Caco-2 (cell line): ENCODE measurements at regions of chr20 and their contacts with region 1.

Region 1: DNA sequence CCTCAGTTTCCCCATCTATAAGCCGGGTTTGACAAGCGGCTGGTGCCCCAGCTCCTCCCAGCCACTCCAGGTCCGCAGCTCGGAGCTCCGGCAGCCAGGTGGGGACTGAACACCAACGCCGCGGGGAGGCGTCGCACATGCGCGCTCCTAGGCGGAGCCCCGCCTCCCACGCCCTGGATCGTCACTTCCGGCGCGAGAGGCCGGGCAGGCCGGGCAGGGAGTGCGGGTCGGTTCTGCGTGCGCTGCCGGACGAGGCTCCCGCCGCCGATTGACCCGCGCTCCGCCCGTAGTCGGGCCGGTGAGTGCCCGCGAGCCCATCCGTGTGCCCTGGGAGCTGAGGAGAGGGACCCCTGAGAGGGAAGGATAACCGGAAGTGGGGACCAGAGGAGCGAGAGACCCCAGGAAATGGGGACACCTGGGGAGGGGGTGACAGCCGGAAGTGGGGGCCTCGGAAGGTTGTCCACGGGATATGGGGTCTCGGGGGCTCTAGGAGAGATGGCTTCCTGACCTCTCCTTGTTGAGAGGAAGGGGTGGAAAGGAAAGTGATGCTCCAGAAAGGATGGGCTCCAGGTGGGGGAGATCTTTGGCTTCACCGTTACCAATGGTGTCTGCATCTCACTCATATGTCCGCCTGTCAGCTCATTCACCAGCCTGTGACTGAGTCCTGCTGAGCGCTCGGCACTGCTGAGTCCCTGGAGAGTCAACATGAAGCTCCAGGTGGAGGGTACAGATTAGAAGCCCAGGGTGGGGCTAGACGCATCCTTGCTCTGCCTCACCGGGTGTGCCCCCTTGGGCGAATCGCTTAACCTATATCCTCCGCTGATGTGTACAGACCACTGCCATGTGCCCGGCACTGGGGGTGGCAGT is at the start of gene TTPAL:
- DNase-seq: peak; percentile 95 to 99
- H3K4me3 ChIP-seq: peak within 1 kb of the TSS; percentile 89
- H3K4me3 Mint-ChIP-seq: peak within 1 kb of the TSS; percentile 98
- H3K27ac Mint-ChIP-seq: peak within 1 kb of the TSS; percentile 96
- H3K4me1 ChIP-seq: peaks cover 19% of the 10 kb centered on the region
- H3K4me1 Mint-ChIP-seq: peaks cover 25% of the 10 kb centered on the region
- H3K27me3 ChIP-seq: no peaks in the 10 kb centered on the region
- H3K27me3 Mint-ChIP-seq: no peaks in the 10 kb centered on the region
- CTCF ChIP-seq: peak; percentile 28 to 78
- total RNA-seq, gene TTPAL: 53.9 and 54.6 TPM in 2 replicates

Region 2: GRCh38 chr20:44210422-44211176 is 265.3 kb before region 1 on chr20 and contains the start of gene OSER1:
- CTCF ChIA-PET with region 1: interaction called, 158 read pairs
- POLR2A ChIA-PET with region 1: interaction called, 7 read pairs
- intact Hi-C with region 1: no loop called
- DNase-seq: peak; percentile 100
- H3K4me3 ChIP-seq: peak within 1 kb of the TSS; percentile 74
- H3K4me3 Mint-ChIP-seq: peak within 1 kb of the TSS; percentile 95
- H3K27ac Mint-ChIP-seq: peak within 1 kb of the TSS; percentile 96
- H3K4me1 ChIP-seq: peaks cover 19% of the 10 kb centered on the region
- H3K4me1 Mint-ChIP-seq: peaks cover 27% of the 10 kb centered on the region
- H3K27me3 ChIP-seq: no peaks in the 10 kb centered on the region
- H3K27me3 Mint-ChIP-seq: no peaks in the 10 kb centered on the region
- CTCF ChIP-seq: no peak
- total RNA-seq, gene OSER1: 79.7 and 82.3 TPM in 2 replicates

Region 3: GRCh38 chr20:44394702-44395460 is 81.0 kb before region 1 on chr20:
- CTCF ChIA-PET with region 1: interaction called, 25 read pairs
- POLR2A ChIA-PET with region 1: interaction called, 4 read pairs
- intact Hi-C with region 1: no loop called
- DNase-seq: peak; percentile 97 to 98
- H3K4me3 ChIP-seq: peak overlapping the region; percentile 11
- H3K4me3 Mint-ChIP-seq: peak overlapping the region; percentile 47
- H3K27ac Mint-ChIP-seq: peak overlapping the region; percentile 78
- H3K4me1 ChIP-seq: peaks cover 79% of the 10 kb centered on the region
- H3K4me1 Mint-ChIP-seq: peaks cover 52% of the 10 kb centered on the region
- H3K27me3 ChIP-seq: no peaks in the 10 kb centered on the region
- H3K27me3 Mint-ChIP-seq: no peaks in the 10 kb centered on the region
- CTCF ChIP-seq: no peak

Region 4: GRCh38 chr20:44460795-44461141 is 15.2 kb before region 1 on chr20:
- CTCF ChIA-PET with region 1: interaction called, 12 read pairs
- POLR2A ChIA-PET with region 1: interaction called, 4 read pairs
- intact Hi-C with region 1: no loop called
- DNase-seq: peak in 1 of 2 experiments; percentile 69
- H3K4me3 ChIP-seq: no peak overlapping the region
- H3K4me3 Mint-ChIP-seq: no peak overlapping the region
- H3K27ac Mint-ChIP-seq: no peak overlapping the region
- H3K4me1 ChIP-seq: peaks cover 9% of the 10 kb centered on the region
- H3K4me1 Mint-ChIP-seq: no peaks in the 10 kb centered on the region
- H3K27me3 ChIP-seq: no peaks in the 10 kb centered on the region
- H3K27me3 Mint-ChIP-seq: no peaks in the 10 kb centered on the region
- CTCF ChIP-seq: peak; percentile 73 to 82

Region 5: DNA sequence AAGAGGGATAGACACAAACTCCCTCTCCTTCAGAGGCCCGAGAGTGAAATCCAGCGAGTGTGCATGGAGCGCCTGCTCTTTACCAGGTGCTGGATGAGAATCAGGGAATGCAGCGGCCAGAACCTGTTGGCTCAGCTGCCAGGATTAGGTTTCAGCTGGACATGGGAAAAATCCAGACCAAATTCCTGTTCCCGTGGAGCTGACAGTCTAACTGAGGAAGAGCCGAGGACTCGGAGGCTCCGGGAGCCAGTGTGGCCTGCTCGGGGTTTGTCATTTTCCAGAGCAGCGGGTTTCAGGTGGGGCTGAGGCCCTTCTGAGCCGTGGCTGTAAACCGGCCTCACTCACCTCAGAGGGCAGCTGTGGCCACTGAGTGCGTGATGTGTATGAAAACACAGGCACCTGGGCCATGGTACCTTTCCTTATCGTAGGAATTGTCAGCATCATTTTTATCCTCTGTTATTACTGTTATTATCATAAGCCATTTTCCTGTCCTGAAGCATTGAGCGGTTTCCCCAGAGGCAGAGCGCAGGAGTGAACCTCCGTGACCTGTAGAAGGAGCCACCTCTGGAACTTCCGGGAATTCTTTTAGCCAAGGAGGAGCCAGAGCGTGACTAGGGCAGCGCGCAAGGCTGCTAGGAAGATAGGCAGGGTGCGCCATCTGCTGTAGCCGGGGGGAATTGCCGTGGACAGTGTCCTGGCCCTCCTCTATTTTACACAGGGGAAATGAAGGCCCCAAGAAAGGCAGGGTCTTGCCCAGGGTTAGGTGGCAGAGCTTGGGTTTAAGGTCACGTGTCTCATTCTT is 133.8 kb after region 1 on chr20:
- CTCF ChIA-PET with region 1: interaction called, 27 read pairs
- POLR2A ChIA-PET with region 1: interaction called, 18 read pairs
- intact Hi-C with region 1: loop called (anchors 1 kb)
- DNase-seq: peak; percentile 97 to 99
- H3K4me3 ChIP-seq: peak overlapping the region; percentile 19
- H3K4me3 Mint-ChIP-seq: peak overlapping the region; percentile 71
- H3K27ac Mint-ChIP-seq: peak overlapping the region; percentile 91
- H3K4me1 ChIP-seq: peaks cover 12% of the 10 kb centered on the region
- H3K4me1 Mint-ChIP-seq: peaks cover 9% of the 10 kb centered on the region
- H3K27me3 ChIP-seq: no peaks in the 10 kb centered on the region
- H3K27me3 Mint-ChIP-seq: no peaks in the 10 kb centered on the region
- CTCF ChIP-seq: peak; percentile 100